Posterior cingulate gyrus (tissue), 11 donors: ENCODE measurements at regions of chr20 and their contacts with region 1.

Region 1: DNA sequence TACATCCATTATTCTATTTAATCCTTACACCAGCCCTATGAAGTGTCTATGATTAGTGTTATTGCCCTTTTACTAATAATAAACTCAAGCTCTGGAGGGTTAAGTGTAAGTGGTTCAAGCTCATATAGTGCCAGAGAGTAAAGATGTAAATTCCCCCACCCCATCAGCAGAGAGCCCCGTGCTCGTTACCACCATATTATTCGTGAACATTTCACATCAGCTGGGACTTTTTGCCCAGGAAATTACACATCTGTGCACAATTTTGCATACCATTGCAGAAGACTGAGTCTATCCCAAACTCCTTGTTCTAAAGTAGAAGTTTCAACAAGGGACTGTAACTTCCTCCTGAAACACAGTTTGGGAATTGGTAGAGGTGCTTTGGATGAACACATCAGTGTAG is 220.1 kb downstream of the BCAS1 start:
- DNase-seq: no peak

Region 2: GRCh38 chr20:53891306-53891944 is 41.1 kb after region 1 on chr20:
- intact Hi-C with region 1: loop called (anchors 2 kb)
- DNase-seq: no peak